ENCODE measurements at regions of chr3 and their contacts with region 1.

Region 1: GRCh38 chr3:44939581-44940111 is 36.3 kb downstream of the ZDHHC3 start:
- DNase-seq: no peak
- ATAC-seq: no peak
- H3K4me3 ChIP-seq: no peak overlapping the region
- H3K27ac ChIP-seq: no peak overlapping the region
- H3K4me1 ChIP-seq: no peaks in the 10 kb centered on the region
- H3K27me3 ChIP-seq: no peaks in the 10 kb centered on the region
- CTCF ChIP-seq: no peak

Region 2: DNA sequence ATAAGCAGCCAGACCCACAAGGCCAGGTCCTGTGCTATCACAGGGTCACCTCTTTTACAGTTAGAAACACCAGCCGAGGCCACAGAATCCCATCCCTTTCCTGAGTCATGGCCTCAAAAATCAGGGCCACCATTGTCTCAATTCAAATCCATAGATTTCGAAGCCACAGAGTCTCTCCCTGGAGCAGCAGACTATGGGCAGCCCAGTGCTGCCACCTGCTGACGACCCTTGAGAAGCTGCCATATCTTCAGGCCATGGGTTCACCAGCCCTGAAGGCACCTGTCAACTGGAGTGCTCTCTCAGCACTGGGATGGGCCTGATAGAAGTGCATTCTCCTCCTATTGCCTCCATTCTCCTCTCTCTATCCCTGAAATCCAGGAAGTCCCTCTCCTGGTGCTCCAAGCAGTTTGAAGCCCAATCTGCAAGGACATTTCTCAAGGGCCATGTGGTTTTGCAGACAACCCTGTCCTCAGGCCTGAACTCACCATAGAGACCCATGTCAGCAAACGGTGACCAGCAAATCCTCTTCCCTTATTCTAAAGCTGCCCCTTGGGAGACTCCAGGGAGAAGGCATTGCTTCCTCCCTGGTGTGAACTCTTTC is 25.7 kb before region 1 on chr3:
- CTCF ChIA-PET with region 1: no interaction called
- POLR2A ChIA-PET with region 1: no interaction called
- in situ Hi-C with region 1: no loop called
- intact Hi-C with region 1: no loop called
- DNase-seq: peak; percentile 47
- ATAC-seq: peak; percentile 89
- H3K4me3 ChIP-seq: no peak overlapping the region
- H3K27ac ChIP-seq: no peak overlapping the region
- H3K4me1 ChIP-seq: no peaks in the 10 kb centered on the region
- H3K27me3 ChIP-seq: no peaks in the 10 kb centered on the region
- CTCF ChIP-seq: peak; percentile 81

Region 3: GRCh38 chr3:45607790-45608189 is 668.1 kb after region 1 on chr3:
- CTCF ChIA-PET with region 1: interaction called, 12 read pairs
- POLR2A ChIA-PET with region 1: no interaction called
- in situ Hi-C with region 1: no loop called
- intact Hi-C with region 1: no loop called
- DNase-seq: no peak
- ATAC-seq: 0 out of 2 replicates have a peak, but pooled peaks have one; percentile 36
- H3K4me3 ChIP-seq: no peak overlapping the region
- H3K27ac ChIP-seq: no peak overlapping the region
- H3K4me1 ChIP-seq: peaks cover 49% of the 10 kb centered on the region
- H3K27me3 ChIP-seq: no peaks in the 10 kb centered on the region
- CTCF ChIP-seq: no peak